AG04450 (cell line): ENCODE measurements at regions of chr5 and their contacts with region 1.

Region 1: DNA sequence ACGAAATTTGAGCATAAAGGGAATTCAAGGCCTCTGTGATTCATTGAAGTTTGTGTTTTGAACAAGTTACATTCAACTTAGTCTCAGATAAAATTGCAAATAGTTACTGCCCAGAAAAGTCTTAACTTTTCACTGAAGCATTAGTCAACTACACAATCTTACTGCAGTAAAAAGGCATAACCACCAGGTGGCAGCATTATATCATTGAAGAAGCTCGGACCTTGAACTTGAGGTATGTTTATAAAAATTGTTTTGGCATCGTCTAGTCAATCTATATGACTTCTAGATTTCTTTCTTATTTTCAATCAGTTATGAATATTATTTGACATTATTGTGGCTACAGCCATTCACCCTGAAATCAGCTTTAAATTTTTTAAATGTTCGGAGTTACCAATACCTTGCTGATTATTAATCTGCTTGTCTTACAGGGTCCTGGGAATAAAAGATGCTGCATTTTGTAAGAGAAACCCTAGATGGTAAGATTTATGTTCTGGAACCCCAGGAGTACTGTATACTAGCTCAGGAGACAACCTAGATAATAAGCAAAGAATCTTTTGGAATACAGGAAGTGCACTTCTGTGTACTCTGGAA is 83.9 kb upstream of the GRAMD2B start:
- DNase-seq: peak; percentile 30
- H3K4me3 ChIP-seq: no peak overlapping the region
- H3K27ac ChIP-seq: no peak overlapping the region
- H3K27me3 ChIP-seq: peaks cover 2% of the 10 kb centered on the region
- CTCF ChIP-seq: peak; percentile 79

Region 2: DNA sequence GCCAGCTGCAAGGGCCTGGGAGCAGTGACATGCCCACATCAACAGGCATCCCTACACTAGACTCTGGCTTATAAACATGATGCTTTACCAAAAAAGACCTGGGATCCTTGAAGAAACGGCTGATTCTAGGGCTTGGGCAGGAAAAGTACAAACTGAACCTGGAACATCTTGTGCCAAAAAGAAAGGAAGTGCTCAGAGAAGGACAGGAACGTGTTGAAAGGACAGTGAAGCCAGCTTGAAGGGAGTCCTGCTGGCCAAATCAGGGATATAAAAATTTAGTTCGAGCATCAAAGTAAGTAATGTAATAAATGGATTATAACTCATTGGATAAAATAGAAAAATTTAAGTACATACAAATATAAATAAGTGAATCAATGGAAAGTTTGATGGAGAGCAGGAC is 197.6 kb after region 1 on chr5:
- CTCF ChIA-PET with region 1: interaction called, 200 read pairs
- POLR2A ChIA-PET with region 1: no interaction called
- DNase-seq: no peak
- H3K4me3 ChIP-seq: no peak overlapping the region
- H3K27ac ChIP-seq: no peak overlapping the region
- H3K27me3 ChIP-seq: no peaks in the 10 kb centered on the region
- CTCF ChIP-seq: peak; percentile 32; the same call in 1 of the 2 replicates

Region 3: DNA sequence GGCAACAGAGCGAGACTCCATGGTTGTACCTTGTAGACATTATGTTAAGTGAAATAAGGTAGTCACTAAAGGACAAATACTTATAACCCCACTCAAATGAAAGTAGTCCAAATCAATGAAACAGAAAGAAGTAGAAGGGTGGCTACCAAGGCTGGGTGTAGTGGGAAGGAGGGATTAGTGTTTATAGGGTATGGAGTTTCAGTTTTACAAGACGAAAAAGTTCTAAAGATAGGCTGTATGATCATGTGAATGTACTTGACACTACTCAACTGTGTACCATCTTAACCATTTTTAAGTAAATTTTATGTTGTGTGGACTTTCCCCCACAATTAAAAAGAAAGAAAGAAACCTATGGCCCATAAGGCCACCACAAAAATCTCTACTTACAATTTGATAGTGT is 223.5 kb after region 1 on chr5:
- CTCF ChIA-PET with region 1: interaction called, 10 read pairs
- POLR2A ChIA-PET with region 1: no interaction called
- DNase-seq: no peak
- H3K4me3 ChIP-seq: no peak overlapping the region
- H3K27ac ChIP-seq: no peak overlapping the region
- H3K27me3 ChIP-seq: no peaks in the 10 kb centered on the region
- CTCF ChIP-seq: no peak

Region 4: GRCh38 chr5:126600631-126601511 is 261.6 kb after region 1 on chr5 and contains the start of gene PHAX:
- CTCF ChIA-PET with region 1: interaction called, 41 read pairs
- POLR2A ChIA-PET with region 1: no interaction called
- DNase-seq: peak; percentile 37
- H3K4me3 ChIP-seq: peak within 1 kb of the TSS; percentile 95
- H3K27ac ChIP-seq: peak within 1 kb of the TSS; percentile 57
- H3K27me3 ChIP-seq: no peaks in the 10 kb centered on the region
- CTCF ChIP-seq: peak; percentile 80
- polyA plus RNA-seq, gene PHAX: 38.9 and 61.0 TPM in 2 replicates

Region 5: GRCh38 chr5:126718246-126718868 is 379.0 kb after region 1 on chr5:
- CTCF ChIA-PET with region 1: no interaction called
- POLR2A ChIA-PET with region 1: no interaction called
- DNase-seq: no peak
- H3K4me3 ChIP-seq: no peak overlapping the region
- H3K27ac ChIP-seq: no peak overlapping the region
- H3K27me3 ChIP-seq: no peaks in the 10 kb centered on the region
- CTCF ChIP-seq: no peak

Region 6: DNA sequence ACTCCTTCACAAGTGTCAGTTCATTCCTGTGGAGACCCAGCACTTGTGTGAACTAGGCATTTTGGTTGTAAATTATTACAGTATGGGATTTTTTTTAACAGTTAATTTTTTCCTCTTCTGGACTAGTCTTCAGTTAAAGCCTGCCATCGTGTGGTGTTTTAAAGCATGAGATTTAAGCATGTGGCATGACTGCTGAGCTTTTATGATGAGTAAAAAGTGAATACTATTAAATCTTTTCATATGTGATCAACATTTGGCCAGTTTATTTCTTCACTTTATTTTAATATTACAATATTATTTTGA is 462.6 kb after region 1 on chr5:
- CTCF ChIA-PET with region 1: interaction called, 11 read pairs
- POLR2A ChIA-PET with region 1: no interaction called
- DNase-seq: no peak
- H3K4me3 ChIP-seq: no peak overlapping the region
- H3K27ac ChIP-seq: no peak overlapping the region
- H3K27me3 ChIP-seq: no peaks in the 10 kb centered on the region
- CTCF ChIP-seq: peak; percentile 59